ENCODE measurements at regions of chr14 and their contacts with region 1.

Region 1: GRCh38 chr14:49971156-49972130 is 78.6 kb downstream of the ARF6 start:
- DNase-seq: peak in 8 of 9 experiments; percentile 31 to 83 (median 61)
- ATAC-seq: peak; percentile 84
- H3K4me3 ChIP-seq: peak overlapping the region; percentile 25 to 31
- H3K4me3 Mint-ChIP-seq: peak overlapping the region; percentile 78
- H3K27ac ChIP-seq: peak overlapping the region; percentile 62 to 87
- H3K27ac Mint-ChIP-seq: peak overlapping the region; percentile 98
- H3K4me1 ChIP-seq: peaks cover 41% of the 10 kb centered on the region
- H3K4me1 Mint-ChIP-seq: peaks cover 60% of the 10 kb centered on the region
- H3K27me3 ChIP-seq: no peaks in the 10 kb centered on the region
- H3K27me3 Mint-ChIP-seq: no peaks in the 10 kb centered on the region
- CTCF ChIP-seq: no peak

Region 2: DNA sequence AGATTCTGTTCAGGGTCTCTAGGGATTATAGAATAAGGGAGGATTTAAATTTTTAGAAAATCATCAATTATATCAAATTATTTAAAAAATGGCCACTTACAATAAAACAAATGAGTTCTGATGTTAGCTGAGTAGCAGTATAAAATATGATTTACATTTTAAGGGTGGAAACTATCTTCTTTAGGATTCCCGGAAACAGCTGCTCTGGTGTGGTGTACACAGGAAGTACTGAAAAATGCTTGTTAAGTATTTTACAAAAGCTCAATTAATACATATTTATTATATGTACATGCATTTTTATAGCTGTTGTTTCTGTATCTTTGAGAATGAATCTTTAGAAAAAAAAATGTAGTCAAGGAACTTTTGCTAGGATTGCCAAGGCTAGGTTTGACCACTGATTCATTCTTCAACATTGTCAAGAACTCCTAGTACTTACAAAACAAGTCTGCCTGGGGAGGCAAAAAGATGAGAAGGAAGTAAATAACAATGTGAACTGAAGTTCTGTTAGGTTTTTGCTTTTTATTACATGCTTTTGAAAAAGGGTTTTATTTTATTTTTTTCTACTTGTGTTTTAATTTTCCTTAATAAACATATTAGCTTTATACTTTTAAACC is 30.5 kb before region 1 on chr14:
- CTCF ChIA-PET with region 1: interaction called, 3 read pairs
- POLR2A ChIA-PET with region 1: interaction called, 15 read pairs
- intact Hi-C with region 1: loop called (anchors 2 kb)
- DNase-seq: peak in 3 of 9 experiments; percentile 31 to 59 (median 37)
- ATAC-seq: peak; percentile 49
- H3K4me3 ChIP-seq: no peak overlapping the region
- H3K4me3 Mint-ChIP-seq: peak overlapping the region; percentile 13
- H3K27ac ChIP-seq: peak overlapping the region in 1 of 2 experiments; percentile 53
- H3K27ac Mint-ChIP-seq: peak overlapping the region; percentile 20
- H3K4me1 ChIP-seq: peaks cover 43% of the 10 kb centered on the region
- H3K4me1 Mint-ChIP-seq: peaks cover 59% of the 10 kb centered on the region
- H3K27me3 ChIP-seq: no peaks in the 10 kb centered on the region
- H3K27me3 Mint-ChIP-seq: no peaks in the 10 kb centered on the region
- CTCF ChIP-seq: no peak

Region 3: GRCh38 chr14:49946320-49947141 is 24.9 kb before region 1 on chr14:
- CTCF ChIA-PET with region 1: interaction called, 4 read pairs
- POLR2A ChIA-PET with region 1: interaction called, 15 read pairs
- intact Hi-C with region 1: loop called (anchors 2 kb)
- DNase-seq: peak in 3 of 9 experiments; percentile 19 to 45 (median 20)
- ATAC-seq: peak; percentile 56
- H3K4me3 ChIP-seq: no peak overlapping the region
- H3K4me3 Mint-ChIP-seq: peak overlapping the region; percentile 66
- H3K27ac ChIP-seq: peak overlapping the region; percentile 49 to 84
- H3K27ac Mint-ChIP-seq: peak overlapping the region; percentile 95
- H3K4me1 ChIP-seq: peaks cover 50% of the 10 kb centered on the region
- H3K4me1 Mint-ChIP-seq: peaks cover 63% of the 10 kb centered on the region
- H3K27me3 ChIP-seq: no peaks in the 10 kb centered on the region
- H3K27me3 Mint-ChIP-seq: no peaks in the 10 kb centered on the region
- CTCF ChIP-seq: no peak

Region 4: DNA sequence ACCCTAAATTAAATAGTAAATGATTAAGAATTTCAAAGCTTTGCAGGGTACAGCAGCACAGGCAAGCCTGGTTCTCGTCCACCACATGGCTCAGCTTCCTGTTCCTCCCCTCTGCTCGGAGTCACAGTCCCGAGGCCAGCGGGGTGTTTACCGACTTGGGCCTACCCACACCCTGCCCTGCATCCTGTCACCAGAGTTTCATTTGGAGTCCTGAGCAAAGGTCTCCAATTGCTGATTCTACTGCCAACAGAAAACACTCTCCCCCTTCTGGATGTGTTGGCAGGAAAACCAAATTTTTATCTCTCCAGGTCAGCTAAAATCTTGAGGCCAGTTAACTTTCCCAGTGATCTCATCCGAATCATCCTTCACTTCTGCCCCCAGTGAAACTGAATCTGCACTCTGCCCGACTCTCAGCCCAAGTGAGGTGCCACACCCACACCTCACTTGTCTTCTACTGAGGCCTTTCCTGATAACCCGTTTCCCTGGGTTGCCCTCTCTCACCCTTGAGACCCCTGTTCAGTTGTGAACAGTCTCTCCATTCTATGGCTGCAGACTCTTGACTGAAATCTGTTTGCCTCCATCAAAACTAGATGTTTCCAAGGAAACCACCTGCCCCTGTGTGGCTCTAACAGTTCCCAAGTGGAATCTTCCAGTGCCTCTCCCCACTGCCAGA is 73.7 kb after region 1 on chr14:
- CTCF ChIA-PET with region 1: interaction called, 3 read pairs
- POLR2A ChIA-PET with region 1: interaction called, 5 read pairs
- intact Hi-C with region 1: loop called in 1 of 2 experiments (anchors 2 kb)
- DNase-seq: peak; percentile 27 to 86 (median 72)
- ATAC-seq: peak; percentile 77
- H3K4me3 ChIP-seq: peak overlapping the region in 1 of 2 experiments; percentile 17
- H3K4me3 Mint-ChIP-seq: peak overlapping the region; percentile 56
- H3K27ac ChIP-seq: peak overlapping the region; percentile 63 to 89
- H3K27ac Mint-ChIP-seq: peak overlapping the region; percentile 91
- H3K4me1 ChIP-seq: peaks cover 62% of the 10 kb centered on the region
- H3K4me1 Mint-ChIP-seq: peaks cover 65% of the 10 kb centered on the region
- H3K27me3 ChIP-seq: no peaks in the 10 kb centered on the region
- H3K27me3 Mint-ChIP-seq: no peaks in the 10 kb centered on the region
- CTCF ChIP-seq: no peak

Region 5: DNA sequence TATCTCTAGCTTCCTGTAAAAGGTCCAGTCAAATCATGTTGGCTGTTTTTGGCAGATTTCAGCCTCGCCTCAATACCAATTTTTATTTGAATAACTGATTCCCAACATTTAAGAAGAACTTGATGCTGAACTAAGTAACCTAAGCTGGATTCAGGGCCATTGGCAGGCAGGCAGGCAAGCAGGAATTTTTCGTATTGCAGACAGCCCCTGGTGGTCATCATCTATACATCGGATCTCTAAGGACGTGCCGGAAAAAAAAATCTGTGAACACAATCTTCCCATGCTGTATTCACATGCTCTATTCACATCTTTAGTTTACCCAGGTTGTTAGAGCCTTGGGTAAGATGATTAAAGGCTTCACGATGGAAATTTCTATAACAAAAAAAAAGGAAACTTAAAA is 137.9 kb after region 1 on chr14:
- CTCF ChIA-PET with region 1: no interaction called
- POLR2A ChIA-PET with region 1: interaction called, 8 read pairs
- intact Hi-C with region 1: loop called in 1 of 2 experiments (anchors 1 kb)
- DNase-seq: no peak
- ATAC-seq: no peak
- H3K4me3 ChIP-seq: no peak overlapping the region
- H3K4me3 Mint-ChIP-seq: no peak overlapping the region
- H3K27ac ChIP-seq: no peak overlapping the region
- H3K27ac Mint-ChIP-seq: no peak overlapping the region
- H3K4me1 ChIP-seq: peaks cover 1% of the 10 kb centered on the region
- H3K4me1 Mint-ChIP-seq: peaks cover 20% of the 10 kb centered on the region
- H3K27me3 ChIP-seq: no peaks in the 10 kb centered on the region
- H3K27me3 Mint-ChIP-seq: no peaks in the 10 kb centered on the region
- CTCF ChIP-seq: no peak

Region 6: DNA sequence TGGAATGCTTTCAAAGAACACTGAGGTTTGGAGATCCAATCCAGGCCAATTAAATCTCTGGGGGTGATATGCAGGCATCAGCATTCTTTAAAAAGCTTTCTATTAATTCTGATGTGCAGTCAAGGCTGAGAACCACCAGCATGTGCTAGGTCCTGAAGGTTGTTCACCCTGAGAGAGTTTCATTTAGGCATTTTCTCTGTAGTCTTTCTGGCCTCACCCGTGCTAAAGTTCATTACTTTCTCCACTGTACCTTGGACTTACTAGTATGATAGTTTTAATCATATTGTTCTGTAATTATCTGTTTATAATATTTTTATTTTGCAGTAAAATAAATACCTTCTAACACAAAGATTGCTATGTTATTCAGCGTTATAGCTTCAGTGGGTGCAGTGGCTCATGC is 227.1 kb after region 1 on chr14:
- CTCF ChIA-PET with region 1: no interaction called
- POLR2A ChIA-PET with region 1: no interaction called
- intact Hi-C with region 1: no loop called
- DNase-seq: no peak
- ATAC-seq: no peak
- H3K4me3 ChIP-seq: no peak overlapping the region
- H3K4me3 Mint-ChIP-seq: no peak overlapping the region
- H3K27ac ChIP-seq: no peak overlapping the region
- H3K27ac Mint-ChIP-seq: no peak overlapping the region
- H3K4me1 ChIP-seq: no peaks in the 10 kb centered on the region
- H3K4me1 Mint-ChIP-seq: no peaks in the 10 kb centered on the region
- H3K27me3 ChIP-seq: no peaks in the 10 kb centered on the region
- H3K27me3 Mint-ChIP-seq: no peaks in the 10 kb centered on the region
- CTCF ChIP-seq: no peak

Region 7: GRCh38 chr14:50855558-50855957 is 884.1 kb after region 1 on chr14:
- CTCF ChIA-PET with region 1: no interaction called
- POLR2A ChIA-PET with region 1: no interaction called
- intact Hi-C with region 1: no loop called
- DNase-seq: no peak
- ATAC-seq: no peak
- H3K4me3 ChIP-seq: no peak overlapping the region
- H3K4me3 Mint-ChIP-seq: no peak overlapping the region
- H3K27ac ChIP-seq: no peak overlapping the region
- H3K27ac Mint-ChIP-seq: no peak overlapping the region
- H3K4me1 ChIP-seq: peaks cover 11% of the 10 kb centered on the region
- H3K4me1 Mint-ChIP-seq: peaks cover 11% of the 10 kb centered on the region
- H3K27me3 ChIP-seq: no peaks in the 10 kb centered on the region
- H3K27me3 Mint-ChIP-seq: no peaks in the 10 kb centered on the region
- CTCF ChIP-seq: no peak